Calu3 (cell line): ENCODE measurements at regions of chr11 and their contacts with region 1.

Region 1: DNA sequence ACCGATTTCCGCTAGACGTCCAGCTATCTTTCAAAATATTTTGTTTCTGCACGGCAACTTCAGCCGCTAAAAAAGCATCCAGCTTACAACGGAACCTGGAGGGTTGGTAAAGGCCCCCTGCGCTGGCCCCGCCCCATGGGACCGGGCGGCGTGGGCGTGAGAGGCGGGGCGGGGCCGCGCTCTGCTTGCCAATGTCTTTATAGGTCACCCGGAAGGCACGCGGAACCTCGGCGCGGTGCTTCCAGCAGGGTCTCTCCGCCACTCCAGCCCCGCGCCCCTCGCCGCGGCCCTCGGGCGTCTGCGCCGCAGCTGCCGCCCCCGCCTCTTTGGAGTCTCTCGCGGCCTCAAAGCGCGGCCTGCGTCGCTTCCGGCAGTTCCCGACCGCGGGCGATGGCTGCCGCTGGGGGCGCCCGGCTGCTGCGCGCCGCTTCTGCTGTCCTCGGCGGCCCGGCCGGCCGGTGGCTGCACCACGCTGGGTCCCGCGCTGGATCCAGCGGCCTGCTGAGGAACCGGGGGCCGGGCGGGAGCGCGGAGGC is at the start of gene FDX1:
- DNase-seq: peak; percentile 74
- H3K4me3 Mint-ChIP-seq: peak within 1 kb of the TSS; percentile 95
- H3K27ac Mint-ChIP-seq: peak within 1 kb of the TSS; percentile 82
- H3K4me1 Mint-ChIP-seq: peaks cover 20% of the 10 kb centered on the region
- H3K27me3 Mint-ChIP-seq: no peaks in the 10 kb centered on the region
- CTCF ChIP-seq: peak; percentile 31
- total RNA-seq, gene FDX1: 9.1 and 10.2 TPM in 2 replicates

Region 2: GRCh38 chr11:109853156-109853776 is 576.5 kb before region 1 on chr11:
- CTCF ChIA-PET with region 1: no interaction called
- intact Hi-C with region 1: loop called (anchors 10 kb)
- DNase-seq: peak; percentile 34
- H3K4me3 Mint-ChIP-seq: no peak overlapping the region
- H3K27ac Mint-ChIP-seq: no peak overlapping the region
- H3K4me1 Mint-ChIP-seq: peaks cover 6% of the 10 kb centered on the region
- H3K27me3 Mint-ChIP-seq: no peaks in the 10 kb centered on the region
- CTCF ChIP-seq: peak; percentile 23

Region 3: DNA sequence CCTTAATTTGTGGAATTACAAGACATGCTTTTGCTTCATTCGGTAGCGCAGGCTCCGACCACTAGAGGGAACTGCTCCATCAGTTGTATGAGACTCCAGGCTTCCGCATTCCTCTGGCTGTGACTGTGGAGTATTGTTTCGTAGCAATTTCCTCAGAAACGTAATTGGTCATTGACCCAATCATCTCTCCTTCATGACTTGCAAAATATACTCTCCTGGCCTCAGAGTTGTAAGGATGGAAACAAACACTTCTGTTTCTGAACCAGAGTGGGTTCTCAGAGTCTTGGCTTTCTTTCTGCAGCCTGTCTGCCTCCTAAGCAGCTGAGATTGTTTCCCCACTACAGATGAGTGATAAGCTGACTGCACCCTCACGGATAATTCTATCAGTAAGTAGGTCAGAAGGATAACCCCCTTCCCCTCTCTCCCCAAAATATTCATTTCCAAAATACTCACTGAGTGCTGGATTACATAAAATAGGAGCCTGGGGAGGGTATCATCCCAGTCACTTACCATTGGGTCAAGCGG is 483.4 kb before region 1 on chr11:
- CTCF ChIA-PET with region 1: no interaction called
- intact Hi-C with region 1: loop called (anchors 1 kb)
- DNase-seq: peak; percentile 76
- H3K4me3 Mint-ChIP-seq: peak overlapping the region; percentile 35
- H3K27ac Mint-ChIP-seq: peak overlapping the region; percentile 19
- H3K4me1 Mint-ChIP-seq: peaks cover 10% of the 10 kb centered on the region
- H3K27me3 Mint-ChIP-seq: no peaks in the 10 kb centered on the region
- CTCF ChIP-seq: peak; percentile 44

Region 4: GRCh38 chr11:110000031-110000502 is 429.7 kb before region 1 on chr11:
- CTCF ChIA-PET with region 1: no interaction called
- intact Hi-C with region 1: no loop called
- DNase-seq: no peak
- H3K4me3 Mint-ChIP-seq: no peak overlapping the region
- H3K27ac Mint-ChIP-seq: no peak overlapping the region
- H3K4me1 Mint-ChIP-seq: no peaks in the 10 kb centered on the region
- H3K27me3 Mint-ChIP-seq: no peaks in the 10 kb centered on the region
- CTCF ChIP-seq: no peak

Region 5: DNA sequence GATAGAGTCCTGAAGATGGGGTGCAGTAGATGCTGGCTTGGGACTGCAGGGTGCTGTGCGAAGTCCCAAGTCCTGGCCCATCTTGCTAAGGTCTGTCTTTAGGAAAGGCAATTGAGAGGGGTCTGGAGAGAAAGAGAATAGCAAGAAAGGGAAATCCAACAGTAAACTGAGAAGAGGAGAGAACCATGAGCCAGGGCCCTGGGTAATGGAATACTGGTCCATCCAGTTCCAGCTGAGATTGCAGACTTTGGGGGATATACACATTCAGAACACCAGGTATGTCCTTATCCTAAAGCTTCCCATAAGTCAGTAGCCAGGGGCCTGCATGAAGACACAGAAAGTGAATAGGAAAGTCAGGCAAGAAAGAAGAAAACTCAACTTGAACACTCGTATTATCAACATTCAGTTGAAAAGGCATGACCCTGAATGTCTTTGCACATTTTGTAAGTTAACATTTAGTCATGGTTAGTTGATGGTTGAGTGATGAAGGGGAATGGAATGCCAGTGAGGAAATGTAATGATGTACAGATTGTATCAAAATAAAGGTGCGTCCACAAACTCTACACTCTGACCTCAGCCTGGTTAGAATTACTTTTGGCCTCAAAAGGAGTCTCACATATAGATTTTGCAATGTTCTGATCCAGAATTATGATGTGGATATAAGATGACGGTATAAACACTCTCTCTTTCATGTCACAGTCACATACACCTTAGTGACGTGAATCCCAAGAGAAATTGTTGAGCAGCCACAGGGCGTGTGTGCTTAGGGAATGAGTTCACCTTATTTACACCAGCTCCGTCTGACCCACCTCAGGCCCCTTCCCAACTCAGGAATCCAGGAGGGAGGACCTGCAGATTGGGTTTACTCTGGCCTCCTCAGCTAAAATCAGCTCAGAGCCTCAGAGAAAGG is 233.7 kb before region 1 on chr11:
- CTCF ChIA-PET with region 1: interaction called, 6 read pairs
- intact Hi-C with region 1: loop called (anchors 1 kb)
- DNase-seq: no peak
- H3K4me3 Mint-ChIP-seq: peak overlapping the region; percentile 8
- H3K27ac Mint-ChIP-seq: peak overlapping the region; percentile 88
- H3K4me1 Mint-ChIP-seq: peaks cover 57% of the 10 kb centered on the region
- H3K27me3 Mint-ChIP-seq: no peaks in the 10 kb centered on the region
- CTCF ChIP-seq: no peak

Region 6: DNA sequence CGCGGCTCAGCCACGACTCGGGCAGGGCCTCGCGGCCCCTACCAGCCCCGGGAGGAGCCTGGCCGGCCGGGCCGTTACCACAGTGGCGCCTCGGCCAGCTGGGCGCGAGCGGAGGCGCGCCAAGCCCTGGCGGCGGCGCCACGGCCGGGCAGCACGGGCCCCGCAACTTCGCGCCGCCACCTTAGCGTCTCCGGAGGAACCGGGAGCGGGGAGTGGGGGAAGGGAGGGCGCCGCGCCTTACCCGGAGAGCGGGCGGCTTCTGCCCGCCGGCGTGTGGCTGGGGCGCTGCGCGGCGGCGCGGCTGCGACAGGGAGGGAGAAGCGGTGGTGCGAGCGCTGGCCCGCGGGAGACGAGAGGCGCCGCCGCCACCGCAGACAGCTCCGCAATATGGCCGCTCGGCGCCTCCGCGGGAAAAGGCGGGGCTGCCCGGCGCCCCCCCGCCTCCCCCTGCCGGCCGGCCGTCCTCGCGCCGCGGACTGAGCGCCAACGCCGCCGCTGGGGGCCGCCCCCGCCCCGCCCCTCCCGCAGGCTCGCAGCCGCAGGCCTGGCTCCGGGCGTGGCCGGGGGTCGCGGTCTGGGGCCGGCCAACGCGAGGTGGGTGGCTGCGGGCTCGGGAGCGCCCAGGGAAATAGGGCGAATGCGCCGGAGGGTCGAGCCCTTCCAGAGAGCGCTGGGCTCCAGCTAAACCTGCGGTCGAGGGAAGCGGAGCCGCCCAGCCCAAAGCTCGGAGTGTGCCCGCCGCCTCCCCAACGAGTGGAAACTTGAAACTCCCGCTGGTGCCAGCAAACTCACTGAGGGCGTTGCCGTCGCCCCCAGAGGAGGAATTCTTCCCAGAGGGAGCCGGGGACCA is 133.3 kb before region 1 on chr11 and contains the start of gene RDX:
- CTCF ChIA-PET with region 1: no interaction called
- intact Hi-C with region 1: loop called (anchors 5 kb)
- DNase-seq: peak; percentile 76
- H3K4me3 Mint-ChIP-seq: peak within 1 kb of the TSS; percentile 75
- H3K27ac Mint-ChIP-seq: peak within 1 kb of the TSS; percentile 75
- H3K4me1 Mint-ChIP-seq: no peaks in the 10 kb centered on the region
- H3K27me3 Mint-ChIP-seq: no peaks in the 10 kb centered on the region
- CTCF ChIP-seq: no peak
- total RNA-seq, gene RDX: 71.8 and 76.8 TPM in 2 replicates

Region 7: GRCh38 chr11:110376711-110377324 is 53.0 kb before region 1 on chr11:
- CTCF ChIA-PET with region 1: no interaction called
- intact Hi-C with region 1: loop called (anchors 2 kb)
- DNase-seq: peak; percentile 75
- H3K4me3 Mint-ChIP-seq: no peak overlapping the region
- H3K27ac Mint-ChIP-seq: no peak overlapping the region
- H3K4me1 Mint-ChIP-seq: peaks cover 15% of the 10 kb centered on the region
- H3K27me3 Mint-ChIP-seq: no peaks in the 10 kb centered on the region
- CTCF ChIP-seq: no peak